ENCODE measurements at regions of chr19 and their contacts with region 1.

Region 1: DNA sequence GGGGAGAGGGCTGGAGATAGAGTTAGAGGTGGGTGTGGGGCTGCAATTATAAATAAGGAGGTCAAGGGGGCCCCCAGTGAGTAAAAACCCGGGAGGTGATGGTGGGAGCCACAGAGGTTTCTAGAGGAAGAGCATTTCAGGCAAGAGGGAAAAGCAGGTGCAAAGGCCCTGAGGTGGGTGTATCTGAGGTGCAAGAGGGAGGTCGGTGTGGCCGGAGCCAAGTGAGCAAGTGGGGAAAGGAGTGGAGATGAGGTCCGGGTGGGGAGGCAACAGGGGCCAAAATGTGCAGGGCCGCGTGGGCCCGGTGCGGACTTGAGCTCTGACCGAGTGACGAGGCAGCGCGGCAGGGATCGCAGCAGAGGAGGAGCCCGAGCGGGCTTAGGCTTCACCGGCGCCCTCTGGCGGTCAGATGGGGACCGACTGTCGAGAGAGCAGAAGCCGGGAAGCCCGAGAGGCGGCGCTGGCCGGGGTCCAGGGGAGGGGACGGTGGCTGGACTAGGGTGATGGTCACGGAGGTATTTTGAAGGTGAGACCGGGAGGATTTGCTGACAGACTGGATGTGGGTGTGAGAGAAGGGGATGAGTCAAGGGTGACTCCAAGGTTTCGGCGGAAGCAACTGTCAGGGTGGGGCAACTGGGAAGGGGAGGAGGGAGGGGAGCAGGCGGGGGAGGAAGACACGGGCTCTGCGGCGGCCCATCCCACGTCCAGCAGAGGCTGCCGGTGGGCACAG is 17.7 kb upstream of the SPACA4 start:
- DNase-seq: peak; percentile 88
- ATAC-seq: peak; percentile 84
- H3K4me3 ChIP-seq: peak overlapping the region; percentile 35 to 50
- H3K27ac ChIP-seq: no peak overlapping the region
- H3K4me1 ChIP-seq: peaks cover 10 to 28% of the 10 kb centered on the region in 2 experiments
- H3K27me3 ChIP-seq: no peaks in the 10 kb centered on the region
- CTCF ChIP-seq: peak; percentile 90 to 97 (median 93)
- POLR2A ChIP-seq: no peak
- RAD21 ChIP-seq: peak; percentile 68

Region 2: GRCh38 chr19:48321622-48322591 is 266.9 kb before region 1 on chr19:
- CTCF ChIA-PET with region 1: interaction called, 8 read pairs
- POLR2A ChIA-PET with region 1: interaction called, 3 read pairs
- RAD21 ChIA-PET with region 1: no interaction called
- intact Hi-C with region 1: loop called (anchors 10 kb)
- DNase-seq: peak; percentile 94
- ATAC-seq: peak; percentile 69
- H3K4me3 ChIP-seq: peak overlapping the region; percentile 55 to 67
- H3K27ac ChIP-seq: peak overlapping the region; percentile 96
- H3K4me1 ChIP-seq: peaks cover 40 to 76% of the 10 kb centered on the region in 2 experiments
- H3K27me3 ChIP-seq: no peaks in the 10 kb centered on the region
- CTCF ChIP-seq: peak in 1 of 3 experiments; percentile 8; a peak in 1 of 6 replicates
- POLR2A ChIP-seq: peak; percentile 59
- RAD21 ChIP-seq: no peak

Region 3: GRCh38 chr19:48351341-48351752 is 237.5 kb before region 1 on chr19:
- CTCF ChIA-PET with region 1: interaction called, 11 read pairs
- POLR2A ChIA-PET with region 1: interaction called, 3 read pairs
- RAD21 ChIA-PET with region 1: no interaction called
- intact Hi-C with region 1: no loop called
- DNase-seq: no peak
- ATAC-seq: peak; percentile 67
- H3K4me3 ChIP-seq: no peak overlapping the region
- H3K27ac ChIP-seq: no peak overlapping the region
- H3K4me1 ChIP-seq: peaks cover 22 to 46% of the 10 kb centered on the region in 2 experiments
- H3K27me3 ChIP-seq: no peaks in the 10 kb centered on the region
- CTCF ChIP-seq: peak; percentile 75 to 96 (median 95); a peak in 5 of 6 replicates
- POLR2A ChIP-seq: no peak
- RAD21 ChIP-seq: peak; percentile 80

Region 4: DNA sequence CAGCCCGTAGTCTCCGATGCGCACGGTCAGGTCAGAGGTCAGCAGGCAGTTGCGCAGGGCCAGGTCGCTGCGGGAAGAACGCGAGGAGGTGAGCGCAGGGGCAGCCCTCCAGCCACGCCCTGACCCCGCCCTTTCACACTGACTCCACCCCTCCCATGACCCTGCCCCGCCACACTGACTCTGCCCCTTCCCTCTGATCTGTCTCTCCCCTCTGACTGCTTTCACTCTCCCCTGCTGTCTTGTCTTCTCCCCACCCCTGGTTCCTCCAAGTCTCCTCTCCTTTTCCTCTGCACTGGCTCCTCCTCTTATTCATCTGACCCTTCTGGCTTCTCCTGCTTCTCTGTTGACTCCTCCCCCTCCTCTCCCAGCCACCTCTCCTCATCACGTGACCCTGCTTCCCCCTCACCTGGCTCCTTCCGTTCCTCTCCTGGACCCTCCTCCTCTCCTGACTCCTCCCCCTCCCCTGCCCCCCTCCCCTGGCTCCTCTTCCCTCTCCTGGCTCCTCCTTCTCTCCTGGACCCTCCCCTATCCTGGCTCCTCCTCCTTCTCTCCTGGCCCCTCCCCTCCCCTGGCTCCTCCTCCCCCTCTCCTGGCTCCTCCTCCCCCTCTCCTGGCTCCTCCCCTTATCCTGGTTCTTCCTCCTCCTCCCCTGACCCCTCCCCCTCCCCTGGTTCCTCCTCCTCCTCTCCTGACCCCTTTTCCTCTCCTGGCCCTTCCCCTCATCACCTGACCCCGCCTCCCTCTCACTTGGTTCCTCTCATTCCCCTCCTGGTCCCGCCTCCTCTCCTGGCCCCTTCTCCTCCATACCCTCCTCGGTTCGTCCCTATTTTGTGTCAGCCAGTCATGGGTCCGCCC is 87.1 kb before region 1 on chr19:
- CTCF ChIA-PET with region 1: interaction called, 276 read pairs
- POLR2A ChIA-PET with region 1: interaction called, 11 read pairs
- RAD21 ChIA-PET with region 1: interaction called, 34 to 75 read pairs
- intact Hi-C with region 1: loop called (anchors 1 kb)
- DNase-seq: peak; percentile 99
- ATAC-seq: peak; percentile 80
- H3K4me3 ChIP-seq: peak overlapping the region; percentile 86 to 97
- H3K27ac ChIP-seq: peak overlapping the region; percentile 92
- H3K4me1 ChIP-seq: peaks cover 12 to 49% of the 10 kb centered on the region in 2 experiments
- H3K27me3 ChIP-seq: no peaks in the 10 kb centered on the region
- CTCF ChIP-seq: no peak
- POLR2A ChIP-seq: peak; percentile 32
- RAD21 ChIP-seq: no peak

Region 5: DNA sequence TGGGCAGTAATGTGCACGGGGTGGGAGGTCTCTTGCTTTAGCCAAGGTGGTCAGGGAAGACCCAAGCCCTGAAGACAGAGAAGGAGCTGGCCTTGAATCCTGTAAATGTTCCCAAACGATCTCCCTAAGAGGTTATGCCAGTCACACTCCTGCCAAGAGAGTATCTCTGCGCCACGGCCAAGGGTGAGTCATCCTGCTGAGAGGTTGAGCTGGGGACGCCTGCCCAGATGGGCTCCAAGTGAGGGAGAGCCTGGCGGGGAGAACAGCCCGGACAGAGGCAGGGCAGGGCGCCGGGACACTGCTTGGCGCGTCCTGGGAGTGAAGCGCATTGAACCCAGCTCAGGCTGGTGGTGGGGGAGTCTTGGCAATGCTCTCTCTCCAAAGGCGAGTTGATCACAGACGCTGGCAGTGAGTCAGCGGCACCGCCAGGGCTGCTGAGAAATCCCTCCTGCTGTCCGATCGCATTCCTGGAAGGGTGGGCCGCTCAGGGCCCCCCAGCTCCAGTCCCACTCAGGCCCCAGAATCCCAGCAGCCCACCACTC is 20.4 kb before region 1 on chr19:
- CTCF ChIA-PET with region 1: interaction called, 22 read pairs
- POLR2A ChIA-PET with region 1: interaction called, 7 read pairs
- RAD21 ChIA-PET with region 1: interaction called in 1 of 2 experiments, 3 read pairs
- intact Hi-C with region 1: no loop called
- DNase-seq: peak; percentile 83
- ATAC-seq: peak; percentile 89
- H3K4me3 ChIP-seq: peak overlapping the region; percentile 40 to 51
- H3K27ac ChIP-seq: peak overlapping the region; percentile 96
- H3K4me1 ChIP-seq: peaks cover 55 to 92% of the 10 kb centered on the region in 2 experiments
- H3K27me3 ChIP-seq: no peaks in the 10 kb centered on the region
- CTCF ChIP-seq: no peak
- POLR2A ChIP-seq: no peak
- RAD21 ChIP-seq: no peak

Measured in HCT116 (cell line).